ENCODE measurements at regions of chr6 and their contacts with region 1.

Region 1: GRCh38 chr6:144215932-144216667 is 65.8 kb downstream of the STX11 start:
- DNase-seq: peak; percentile 88 to 93
- ATAC-seq: peak; percentile 92 to 93
- H3K4me3 ChIP-seq: peak overlapping the region; percentile 54 to 82 (median 77)
- H3K27ac ChIP-seq: peak overlapping the region; percentile 86 to 92 (median 88)
- H3K4me1 ChIP-seq: peaks cover 10 to 15% of the 10 kb centered on the region in 2 donors
- H3K27me3 ChIP-seq: no peaks in the 10 kb centered on the region
- CTCF ChIP-seq: peak; percentile 71 to 96 (median 85)
- POLR2A ChIP-seq: peak; percentile 18 to 34

Region 2: GRCh38 chr6:143187238-143187923 is 1028.7 kb before region 1 on chr6:
- in situ Hi-C with region 1: no loop called
- intact Hi-C with region 1: no loop called
- DNase-seq: no peak
- ATAC-seq: no peak
- H3K4me3 ChIP-seq: no peak overlapping the region
- H3K27ac ChIP-seq: no peak overlapping the region
- H3K4me1 ChIP-seq: peaks cover 0 to 3% of the 10 kb centered on the region in 2 donors
- H3K27me3 ChIP-seq: no peaks in the 10 kb centered on the region
- CTCF ChIP-seq: no peak
- POLR2A ChIP-seq: no peak

Region 3: DNA sequence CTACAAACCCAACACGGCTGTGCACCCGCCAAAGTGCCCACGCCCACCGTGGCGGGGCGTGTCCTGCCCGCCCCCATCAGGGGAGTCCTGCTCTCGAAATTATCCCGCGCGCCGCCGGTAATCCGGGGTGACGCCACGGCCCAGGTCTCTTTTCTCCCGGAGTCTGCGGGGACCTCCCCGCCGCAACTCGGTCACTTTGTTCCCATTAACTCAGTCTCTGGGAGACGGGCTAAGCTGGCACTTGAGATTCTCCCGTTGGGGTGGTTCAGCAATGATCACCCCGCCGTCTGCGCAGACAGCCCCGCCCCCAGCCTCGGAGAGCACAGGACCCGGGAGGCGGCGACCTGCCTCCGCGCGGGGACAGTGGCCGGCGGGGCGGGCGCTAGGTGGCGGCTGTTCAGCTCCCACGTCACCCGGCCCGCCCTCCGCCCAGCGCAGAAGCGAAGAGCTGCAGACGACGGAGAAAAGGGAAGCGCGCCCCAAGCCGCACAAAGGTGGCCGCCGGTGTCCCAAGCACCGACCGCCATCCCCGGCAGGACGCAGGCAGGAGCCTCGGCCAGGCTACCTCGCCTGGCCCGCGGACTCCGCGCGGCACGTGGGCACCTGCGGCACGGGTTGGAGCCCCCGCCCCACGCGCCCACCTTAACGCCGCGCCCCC is 152.2 kb before region 1 on chr6:
- in situ Hi-C with region 1: no loop called
- intact Hi-C with region 1: loop called (anchors 1 kb)
- DNase-seq: peak; percentile 63 to 65
- ATAC-seq: peak; percentile 81 to 88
- H3K4me3 ChIP-seq: peak overlapping the region; percentile 57 to 82 (median 74)
- H3K27ac ChIP-seq: peak overlapping the region in 1 of 4 donors; percentile 21
- H3K4me1 ChIP-seq: peaks cover 4% of the 10 kb centered on the region in 2 donors
- H3K27me3 ChIP-seq: peaks cover 8 to 19% (median 19%) of the 10 kb centered on the region in 3 donors
- CTCF ChIP-seq: peak in 3 of 5 experiments; percentile 8 to 44 (median 38)
- POLR2A ChIP-seq: peak; percentile 27 to 57

Region 4: GRCh38 chr6:144149891-144150709 is 66.0 kb before region 1 on chr6 and contains the start of gene STX11:
- in situ Hi-C with region 1: no loop called
- intact Hi-C with region 1: loop called (anchors 5 kb)
- DNase-seq: peak; percentile 19 to 27
- ATAC-seq: peak; percentile 45 to 60
- H3K4me3 ChIP-seq: peak within 1 kb of the TSS; percentile 62 to 81 (median 70)
- H3K27ac ChIP-seq: peak within 1 kb of the TSS; percentile 10 to 72 (median 64)
- H3K4me1 ChIP-seq: peaks cover 2 to 4% of the 10 kb centered on the region in 2 donors
- H3K27me3 ChIP-seq: peaks cover 8 to 21% (median 8%) of the 10 kb centered on the region in 3 donors
- CTCF ChIP-seq: no peak
- POLR2A ChIP-seq: peak; percentile 62 to 75
- total RNA-seq, gene STX11: 2.0 to 5.2 (median 4.3) TPM

Region 5: GRCh38 chr6:144265390-144265789 is 49.3 kb after region 1 on chr6:
- in situ Hi-C with region 1: no loop called
- intact Hi-C with region 1: loop called (anchors 5 kb)
- DNase-seq: no peak
- ATAC-seq: no peak
- H3K4me3 ChIP-seq: no peak overlapping the region
- H3K27ac ChIP-seq: peak overlapping the region; percentile 72 to 87 (median 76)
- H3K4me1 ChIP-seq: peaks cover 21 to 26% of the 10 kb centered on the region in 2 donors
- H3K27me3 ChIP-seq: no peaks in the 10 kb centered on the region
- CTCF ChIP-seq: no peak
- POLR2A ChIP-seq: no peak

Region 6: DNA sequence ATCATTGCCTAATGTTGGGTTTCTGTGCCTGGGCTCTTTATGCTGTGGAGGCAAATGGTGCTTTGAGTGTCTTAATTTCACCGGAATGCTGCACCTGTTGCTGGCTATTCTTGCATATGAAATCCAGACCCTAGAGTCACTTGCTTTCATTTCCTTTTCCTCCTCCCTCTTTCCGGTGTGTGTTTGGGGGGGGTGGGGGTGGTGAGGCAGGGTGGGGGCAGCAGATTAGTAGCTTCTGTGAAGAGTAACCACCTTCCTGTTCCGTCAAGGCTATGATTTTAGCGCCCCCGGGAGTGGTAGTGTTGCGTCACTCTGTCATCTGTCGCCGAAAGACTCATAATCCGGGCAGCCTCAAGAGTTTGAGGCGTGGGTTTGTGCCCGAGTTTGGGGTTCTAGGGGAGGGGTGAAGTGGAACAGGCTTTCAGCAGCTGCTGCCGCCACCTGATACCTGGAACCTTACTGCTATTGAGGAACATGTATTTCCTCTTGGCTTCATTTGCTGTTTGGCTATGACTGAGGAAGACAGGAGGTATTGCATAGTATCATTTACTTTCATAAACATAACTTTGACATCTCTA is 118.1 kb after region 1 on chr6:
- in situ Hi-C with region 1: no loop called
- intact Hi-C with region 1: loop called (anchors 5 kb)
- DNase-seq: peak; percentile 30 to 62
- ATAC-seq: peak; percentile 83 to 92
- H3K4me3 ChIP-seq: peak overlapping the region; percentile 35 to 56 (median 46)
- H3K27ac ChIP-seq: peak overlapping the region; percentile 78 to 86 (median 84)
- H3K4me1 ChIP-seq: peaks cover 50 to 63% of the 10 kb centered on the region in 2 donors
- H3K27me3 ChIP-seq: no peaks in the 10 kb centered on the region
- CTCF ChIP-seq: no peak
- POLR2A ChIP-seq: no peak

Region 7: DNA sequence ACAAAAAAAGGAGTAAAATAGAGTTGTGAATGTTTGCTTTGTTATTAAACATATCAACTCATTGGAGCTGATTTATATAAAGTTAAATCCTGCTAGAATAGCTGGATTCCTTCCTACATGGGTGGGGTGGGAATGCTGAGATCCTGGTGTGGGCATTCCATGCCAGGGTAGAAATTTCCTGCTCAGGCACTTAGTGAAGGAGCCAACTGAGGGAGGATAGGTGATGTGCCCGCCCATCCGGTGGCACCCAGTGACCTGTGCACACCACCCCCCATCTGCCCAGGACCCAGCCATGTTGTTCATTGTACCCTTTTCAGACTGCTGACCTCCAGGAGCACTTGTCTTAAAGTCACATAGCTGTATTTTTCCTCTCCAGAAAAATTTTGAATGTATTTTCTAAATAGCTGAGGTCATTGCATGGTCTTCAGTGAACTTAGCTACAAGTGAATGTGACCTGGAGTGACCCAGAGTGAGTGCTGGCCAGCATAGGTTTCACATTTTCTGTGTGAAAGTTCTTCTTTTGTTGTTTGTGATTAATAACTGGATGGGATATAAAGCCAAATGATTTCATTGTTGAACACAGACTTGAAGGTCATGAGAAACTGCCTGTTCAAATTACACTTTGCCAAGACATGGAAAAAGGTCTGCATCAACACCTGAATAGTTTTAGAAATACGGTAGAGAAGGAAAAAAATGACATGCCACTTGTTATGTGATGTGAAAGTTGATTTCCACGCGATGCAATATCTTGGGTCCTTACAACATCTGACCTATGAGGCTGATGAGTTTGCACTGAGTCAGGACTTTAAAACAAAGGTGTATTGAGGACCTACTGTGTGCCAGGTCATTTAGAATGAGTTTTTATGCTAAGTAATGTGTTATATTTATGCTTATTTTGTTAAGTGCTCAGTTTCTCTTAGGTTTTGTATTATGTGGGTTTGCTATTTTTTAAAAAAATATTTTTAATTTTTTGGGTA is 146.2 kb after region 1 on chr6:
- in situ Hi-C with region 1: no loop called
- intact Hi-C with region 1: no loop called
- DNase-seq: no peak
- ATAC-seq: peak; percentile 78
- H3K4me3 ChIP-seq: no peak overlapping the region
- H3K27ac ChIP-seq: peak overlapping the region; percentile 45 to 66 (median 54)
- H3K4me1 ChIP-seq: peaks cover 16 to 47% of the 10 kb centered on the region in 2 donors
- H3K27me3 ChIP-seq: no peaks in the 10 kb centered on the region
- CTCF ChIP-seq: no peak
- POLR2A ChIP-seq: no peak

Measured in gastrocnemius medialis (tissue), 4 donors.